ENCODE measurements at regions of chr9 and their contacts with region 1.

Region 1: DNA sequence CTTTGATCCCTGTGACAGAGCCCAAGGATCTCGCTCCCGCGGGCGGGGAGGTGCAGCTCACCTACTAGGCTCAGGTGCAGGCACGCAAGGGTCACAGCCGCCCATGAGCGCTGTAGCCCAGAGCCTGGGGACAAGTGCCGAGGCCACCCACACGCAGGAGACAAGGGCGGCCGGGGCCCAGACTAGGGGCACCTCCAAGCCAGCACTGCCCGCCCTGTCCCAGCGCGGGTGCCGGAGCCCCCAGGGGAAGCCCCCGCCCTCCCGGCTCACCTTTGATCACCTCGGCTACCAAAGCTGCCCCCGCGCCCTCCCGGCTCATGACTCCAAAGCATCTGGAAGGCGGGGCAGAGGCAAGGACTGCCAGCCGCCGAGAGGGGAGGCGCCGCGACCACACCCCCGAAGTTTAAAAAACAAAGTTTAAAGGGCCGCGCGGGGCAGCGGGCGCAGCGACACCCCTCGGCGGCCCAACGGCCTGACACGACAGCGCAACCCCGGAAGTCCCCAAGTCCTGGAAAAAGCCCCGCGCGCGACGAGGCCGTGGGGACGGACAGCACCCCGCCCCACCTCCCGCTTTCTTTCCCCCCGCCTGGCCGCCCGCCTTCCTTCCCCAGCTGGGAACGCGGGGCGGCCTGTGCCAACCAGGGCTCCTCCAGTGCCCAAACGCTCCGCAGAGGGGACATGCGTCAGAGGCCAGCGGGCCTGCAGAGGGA is 53.0 kb downstream of the CDC14B start:
- DNase-seq: peak; percentile 68 to 91 (median 79)
- ATAC-seq: peak; percentile 84 to 87
- H3K4me3 Mint-ChIP-seq: peak overlapping the region; percentile 82 to 92 (median 88)
- H3K27ac Mint-ChIP-seq: peak overlapping the region; percentile 79 to 95 (median 87)
- H3K4me1 Mint-ChIP-seq: peaks cover 6 to 31% (median 23%) of the 10 kb centered on the region in 4 donors
- H3K27me3 Mint-ChIP-seq: peaks cover under 1 to 14% (median 7%) of the 10 kb centered on the region in 5 donors

Region 2: GRCh38 chr9:96449845-96450612 is 116.6 kb before region 1 on chr9 and contains the start of gene HABP4:
- POLR2A ChIA-PET with region 1: interaction called, 51 read pairs
- DNase-seq: peak; percentile 92 to 99 (median 95)
- ATAC-seq: peak; percentile 89 to 95
- H3K4me3 Mint-ChIP-seq: peak within 1 kb of the TSS; percentile 87 to 98 (median 95)
- H3K27ac Mint-ChIP-seq: peak within 1 kb of the TSS; percentile 74 to 97 (median 92)
- H3K4me1 Mint-ChIP-seq: peaks cover 9 to 29% (median 25%) of the 10 kb centered on the region in 4 donors
- H3K27me3 Mint-ChIP-seq: peaks cover 0 to 8% (median 3%) of the 10 kb centered on the region in 5 donors
- polyA plus RNA-seq, gene HABP4: 13.5 to 31.8 (median 14.3) TPM

Measured in naive thymus-derived CD8-positive, alpha-beta T cell (primary cell).